ENCODE measurements at regions of chr2 and their contacts with region 1.

Region 1: DNA sequence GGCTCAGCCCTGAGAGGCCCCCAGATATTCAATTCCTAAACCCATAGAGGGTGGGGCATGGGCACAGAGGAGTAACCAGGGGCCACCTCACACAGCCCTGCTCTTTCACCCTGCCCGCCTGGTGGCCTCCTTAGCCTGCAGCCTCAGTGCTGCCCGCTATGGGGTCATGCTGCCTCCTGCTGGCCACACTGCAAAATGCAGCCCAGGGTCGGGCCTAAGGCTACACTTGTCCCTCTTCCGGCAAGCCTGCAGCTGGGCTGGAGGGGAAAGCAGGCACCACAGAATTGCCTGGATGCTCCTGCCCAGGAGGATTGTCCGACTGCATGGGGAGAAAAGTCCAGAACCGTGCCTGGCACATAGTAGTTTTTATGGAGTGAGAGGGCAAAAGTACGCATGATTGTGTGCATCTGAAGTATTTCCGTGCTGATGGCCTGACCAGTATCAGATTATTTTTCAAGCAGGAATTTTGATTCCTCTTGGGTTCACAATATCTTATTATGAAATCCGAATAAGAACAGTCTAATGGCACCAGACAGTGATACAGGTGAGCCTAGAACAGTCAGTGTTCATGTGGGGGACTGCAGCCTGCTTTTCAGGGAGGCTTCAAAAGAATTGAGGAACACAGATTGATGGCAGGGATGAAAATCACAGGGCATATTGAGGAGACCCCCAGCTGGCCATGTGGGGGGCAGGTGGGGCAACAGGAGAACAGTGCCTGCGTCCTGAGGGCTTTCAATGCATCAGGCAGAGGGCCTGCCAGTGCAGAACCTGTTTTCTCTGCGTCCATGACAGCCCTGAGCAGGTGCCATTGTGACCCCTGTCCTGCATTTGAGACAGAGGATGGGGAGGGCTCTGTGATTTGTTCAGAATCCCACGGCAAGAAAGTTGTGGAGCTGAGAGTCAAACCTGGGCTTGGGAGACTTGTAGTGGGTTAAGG is 51.2 kb upstream of the ALPP start:
- DNase-seq: peak; percentile 91
- H3K4me3 Mint-ChIP-seq: no peak overlapping the region
- H3K27ac Mint-ChIP-seq: peak overlapping the region; percentile 28
- H3K4me1 Mint-ChIP-seq: peaks cover 12% of the 10 kb centered on the region
- H3K27me3 Mint-ChIP-seq: no peaks in the 10 kb centered on the region

Region 2: DNA sequence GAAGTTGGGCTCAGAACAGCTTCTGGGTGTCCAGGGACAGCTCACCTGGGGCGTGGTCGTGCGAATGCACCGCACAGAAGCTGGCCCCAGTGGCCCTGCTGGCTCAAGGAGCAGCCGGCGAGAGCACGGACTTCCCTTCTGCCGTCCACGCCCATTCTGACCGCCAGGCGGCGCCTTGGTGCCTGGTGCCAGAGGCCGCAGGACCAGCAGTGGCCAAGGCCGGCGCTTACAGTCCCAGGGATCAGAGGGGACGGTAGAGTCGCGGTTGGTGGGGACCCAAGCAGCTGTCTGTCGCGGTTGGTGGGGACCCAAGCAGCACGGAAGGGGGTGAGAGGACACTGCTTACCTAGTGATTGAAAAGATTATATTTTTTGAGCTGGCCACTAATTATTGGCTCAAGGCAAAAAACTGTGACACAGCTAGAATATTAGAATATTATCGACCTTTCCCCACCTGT is 426.9 kb before region 1 on chr2:
- CTCF ChIA-PET with region 1: interaction called, 31 read pairs
- DNase-seq: peak; percentile 71
- H3K4me3 Mint-ChIP-seq: no peak overlapping the region
- H3K27ac Mint-ChIP-seq: no peak overlapping the region
- H3K4me1 Mint-ChIP-seq: no peaks in the 10 kb centered on the region
- H3K27me3 Mint-ChIP-seq: peaks cover 33% of the 10 kb centered on the region

Region 3: GRCh38 chr2:232142049-232142448 is 185.3 kb before region 1 on chr2:
- CTCF ChIA-PET with region 1: interaction called, 14 read pairs
- DNase-seq: peak; percentile 49
- H3K4me3 Mint-ChIP-seq: no peak overlapping the region
- H3K27ac Mint-ChIP-seq: no peak overlapping the region
- H3K4me1 Mint-ChIP-seq: peaks cover 27% of the 10 kb centered on the region
- H3K27me3 Mint-ChIP-seq: no peaks in the 10 kb centered on the region

Region 4: GRCh38 chr2:232310121-232310520 is 17.3 kb before region 1 on chr2:
- CTCF ChIA-PET with region 1: interaction called, 19 read pairs
- DNase-seq: peak; percentile 51
- H3K4me3 Mint-ChIP-seq: peak overlapping the region; percentile 11
- H3K27ac Mint-ChIP-seq: peak overlapping the region; percentile 93
- H3K4me1 Mint-ChIP-seq: peaks cover 77% of the 10 kb centered on the region
- H3K27me3 Mint-ChIP-seq: no peaks in the 10 kb centered on the region

Region 5: GRCh38 chr2:232438951-232439757 is 111.8 kb after region 1 on chr2:
- CTCF ChIA-PET with region 1: interaction called, 21 read pairs
- DNase-seq: peak; percentile 60
- H3K4me3 Mint-ChIP-seq: no peak overlapping the region
- H3K27ac Mint-ChIP-seq: no peak overlapping the region
- H3K4me1 Mint-ChIP-seq: no peaks in the 10 kb centered on the region
- H3K27me3 Mint-ChIP-seq: peaks cover 21% of the 10 kb centered on the region

Measured in activated naive CD4-positive, alpha-beta T cell treated with anti-CD3 and anti-CD28 coated beads, Interleukin-2, amount 10 ng/mL, durations not matched to agents 7 days and 5 days (primary cell).